Activated CD4-positive, alpha-beta T cell treated with anti-CD3 and anti-CD28 coated beads for 36 hours (primary cell): ENCODE measurements at regions of chr1 and their contacts with region 1.

Region 1: GRCh38 chr1:198713081-198713480 is 74.2 kb downstream of the PTPRC start:
- DNase-seq: no peak
- ATAC-seq: peak; percentile 66
- H3K4me3 Mint-ChIP-seq: no peak overlapping the region
- H3K27ac Mint-ChIP-seq: peak overlapping the region; percentile 63
- H3K4me1 Mint-ChIP-seq: peaks cover 53% of the 10 kb centered on the region
- H3K27me3 Mint-ChIP-seq: no peaks in the 10 kb centered on the region

Region 2: DNA sequence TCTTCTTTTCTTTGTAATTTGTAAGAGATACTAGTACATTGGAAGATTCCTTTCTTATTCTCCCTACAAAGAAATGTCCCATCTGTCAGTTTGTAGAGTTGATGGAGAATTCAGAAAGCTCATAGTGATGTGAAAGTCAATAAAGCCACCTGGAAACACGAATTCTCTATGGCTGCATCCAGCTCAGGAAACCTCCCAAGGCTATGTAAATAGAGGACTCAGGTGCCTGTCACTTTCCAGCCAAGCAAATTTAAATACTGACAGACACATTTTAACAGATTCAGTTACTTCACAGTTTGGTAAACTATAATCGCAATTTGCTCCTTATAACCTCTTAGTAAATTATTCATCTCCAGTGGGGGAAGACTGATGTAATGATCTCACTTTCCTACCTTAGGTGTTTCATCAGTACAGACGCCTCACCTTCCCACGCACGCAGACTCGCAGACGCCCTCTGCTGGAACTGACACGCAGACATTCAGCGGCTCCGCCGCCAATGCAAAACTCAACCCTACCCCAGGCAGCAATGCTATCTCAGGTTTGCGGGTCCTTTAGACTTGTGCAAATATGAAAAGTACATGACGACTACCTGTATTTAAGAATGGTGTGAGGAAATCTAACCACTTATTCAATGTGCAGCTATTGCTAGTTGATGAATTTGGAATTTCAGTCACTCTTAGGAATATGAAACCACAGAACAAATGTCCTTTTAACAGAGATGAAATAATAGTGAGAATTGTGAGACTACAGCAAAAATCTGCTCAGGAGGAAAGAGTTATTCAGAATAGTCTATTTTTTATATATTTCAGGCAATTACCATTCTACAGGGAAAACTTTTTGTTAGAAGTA is 13.7 kb before region 1 on chr1:
- CTCF ChIA-PET with region 1: interaction called, 8 read pairs
- POLR2A ChIA-PET with region 1: no interaction called
- intact Hi-C with region 1: loop called in 1 of 2 experiments (anchors 1 kb)
- DNase-seq: peak; percentile 90
- ATAC-seq: peak; percentile 80
- H3K4me3 Mint-ChIP-seq: peak overlapping the region; percentile 30
- H3K27ac Mint-ChIP-seq: peak overlapping the region; percentile 87
- H3K4me1 Mint-ChIP-seq: peaks cover 78% of the 10 kb centered on the region
- H3K27me3 Mint-ChIP-seq: no peaks in the 10 kb centered on the region

Region 3: DNA sequence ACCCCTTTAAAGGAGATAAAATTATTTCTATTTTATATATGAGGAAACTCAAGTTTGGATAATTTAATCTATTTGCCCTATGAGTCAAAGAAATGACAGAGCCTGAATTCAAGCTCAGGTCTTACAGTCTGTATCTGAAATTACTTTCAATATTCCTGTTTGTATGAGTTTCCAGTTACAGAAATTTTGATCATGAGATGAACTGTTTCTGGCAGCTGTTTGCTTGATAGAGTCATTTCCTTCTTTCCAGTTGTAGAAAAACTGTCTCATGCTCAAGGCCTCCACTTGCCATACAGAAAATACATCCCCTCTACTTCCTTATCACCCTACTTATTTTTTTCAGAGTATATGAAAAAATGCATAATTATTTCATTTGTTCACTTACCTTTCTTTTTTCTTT is 13.4 kb after region 1 on chr1:
- CTCF ChIA-PET with region 1: interaction called, 3 read pairs
- POLR2A ChIA-PET with region 1: no interaction called
- intact Hi-C with region 1: loop called in 1 of 2 experiments (anchors 2 kb)
- DNase-seq: no peak
- ATAC-seq: peak; percentile 80
- H3K4me3 Mint-ChIP-seq: no peak overlapping the region
- H3K27ac Mint-ChIP-seq: peak overlapping the region; percentile 60
- H3K4me1 Mint-ChIP-seq: peaks cover 65% of the 10 kb centered on the region
- H3K27me3 Mint-ChIP-seq: no peaks in the 10 kb centered on the region

Region 4: DNA sequence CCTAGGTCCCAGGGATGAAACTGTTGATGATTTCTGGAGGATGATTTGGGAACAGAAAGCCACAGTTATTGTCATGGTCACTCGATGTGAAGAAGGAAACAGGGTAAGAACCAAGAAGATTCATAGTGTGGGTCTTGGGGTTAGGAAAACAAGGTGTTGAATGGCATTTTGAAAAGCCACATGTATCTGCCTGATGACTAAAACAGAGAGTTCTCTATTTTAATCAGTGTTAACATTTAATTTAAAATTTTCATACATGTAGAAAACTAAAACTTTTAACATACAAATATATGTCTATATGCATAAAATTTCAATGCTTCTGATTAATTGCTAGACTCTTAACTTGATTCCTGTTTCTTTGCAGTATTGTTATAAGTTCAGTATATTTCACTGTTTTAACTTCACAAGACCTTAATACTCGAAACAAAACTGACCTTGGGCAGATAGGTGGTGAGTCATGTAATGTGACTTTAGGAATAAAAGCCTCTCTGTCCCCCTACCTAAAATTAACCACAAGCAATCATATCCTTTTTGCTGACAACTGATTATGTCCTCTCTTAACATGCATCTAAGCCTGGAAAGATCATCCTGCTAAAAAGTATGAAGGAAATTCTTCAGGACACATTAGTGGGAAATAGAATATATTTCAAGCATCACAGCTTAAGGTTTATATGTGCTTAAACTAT is 21.4 kb after region 1 on chr1:
- CTCF ChIA-PET with region 1: no interaction called
- POLR2A ChIA-PET with region 1: no interaction called
- intact Hi-C with region 1: loop called in 1 of 2 experiments (anchors 1 kb)
- DNase-seq: no peak
- ATAC-seq: peak; percentile 85
- H3K4me3 Mint-ChIP-seq: peak overlapping the region; percentile 1
- H3K27ac Mint-ChIP-seq: peak overlapping the region; percentile 42
- H3K4me1 Mint-ChIP-seq: peaks cover 73% of the 10 kb centered on the region
- H3K27me3 Mint-ChIP-seq: no peaks in the 10 kb centered on the region

Region 5: DNA sequence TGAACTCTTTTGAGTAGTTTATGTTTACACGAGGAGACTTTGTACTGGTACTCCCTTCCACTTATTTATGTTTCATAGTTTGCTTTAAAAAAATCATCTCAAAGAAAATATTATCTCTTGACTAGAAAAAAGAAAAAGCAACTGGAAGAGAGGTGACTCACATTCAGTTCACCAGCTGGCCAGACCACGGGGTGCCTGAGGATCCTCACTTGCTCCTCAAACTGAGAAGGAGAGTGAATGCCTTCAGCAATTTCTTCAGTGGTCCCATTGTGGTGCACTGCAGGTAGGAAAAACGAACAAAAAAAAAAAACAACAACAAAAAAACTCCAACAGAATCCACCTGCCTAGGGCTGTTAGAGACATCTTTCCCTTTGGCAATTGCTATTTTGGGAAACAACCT is 28.7 kb after region 1 on chr1:
- CTCF ChIA-PET with region 1: interaction called, 3 read pairs
- POLR2A ChIA-PET with region 1: no interaction called
- intact Hi-C with region 1: loop called in 1 of 2 experiments (anchors 5 kb)
- DNase-seq: peak; percentile 30
- ATAC-seq: no peak
- H3K4me3 Mint-ChIP-seq: no peak overlapping the region
- H3K27ac Mint-ChIP-seq: no peak overlapping the region
- H3K4me1 Mint-ChIP-seq: peaks cover 55% of the 10 kb centered on the region
- H3K27me3 Mint-ChIP-seq: no peaks in the 10 kb centered on the region